Activated CD4-positive, alpha-beta T cell treated with anti-CD3 and anti-CD28 coated beads for 36 hours (primary cell): ENCODE measurements at regions of chr2 and their contacts with region 1.

Region 1: DNA sequence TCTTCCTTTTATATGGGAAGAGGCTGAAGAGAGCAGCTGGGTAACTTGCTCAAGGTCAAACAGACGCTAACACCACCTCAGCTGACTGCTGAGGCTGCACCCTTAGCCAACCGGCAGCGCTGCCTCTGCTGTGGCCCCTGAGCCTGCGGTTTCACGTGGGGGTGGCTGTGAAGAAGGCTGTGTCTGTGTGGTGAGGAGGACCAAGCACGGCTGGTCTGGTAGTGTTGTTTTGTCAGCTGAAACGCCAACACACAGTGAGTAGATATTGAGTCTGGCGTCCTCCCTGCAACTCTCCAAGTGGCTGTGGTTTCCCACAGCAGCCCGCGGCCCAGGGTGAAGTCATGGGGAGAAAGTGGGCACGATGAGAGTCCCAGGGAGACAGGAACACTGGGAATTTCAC is 69.6 kb downstream of the THNSL2 start:
- DNase-seq: no peak
- ATAC-seq: no peak
- H3K4me3 Mint-ChIP-seq: no peak overlapping the region
- H3K27ac Mint-ChIP-seq: no peak overlapping the region
- H3K4me1 Mint-ChIP-seq: no peaks in the 10 kb centered on the region
- H3K27me3 Mint-ChIP-seq: peaks cover 3% of the 10 kb centered on the region

Region 2: DNA sequence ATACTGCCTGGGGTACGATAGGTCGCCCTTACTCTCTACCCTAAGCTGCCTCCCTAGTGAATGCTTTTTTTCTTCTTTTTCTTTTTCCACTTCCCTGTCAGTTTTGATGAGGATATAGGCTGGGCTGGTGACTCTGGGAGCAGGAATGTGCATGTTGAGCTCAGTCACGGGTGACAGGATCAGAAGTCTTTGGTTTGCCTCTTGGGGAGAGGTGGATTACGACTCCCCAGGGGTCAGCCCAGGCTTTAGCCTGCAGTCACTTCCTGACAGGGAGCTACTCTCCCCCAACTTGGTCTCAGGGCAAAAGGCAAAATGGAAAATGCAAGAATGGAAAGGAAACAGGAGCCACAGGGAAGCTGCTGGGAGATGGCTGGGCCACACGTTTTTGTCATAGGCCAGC is 12.3 kb before region 1 on chr2:
- CTCF ChIA-PET with region 1: no interaction called
- POLR2A ChIA-PET with region 1: no interaction called
- intact Hi-C with region 1: loop called in 1 of 2 experiments (anchors 2 kb)
- DNase-seq: no peak
- ATAC-seq: no peak
- H3K4me3 Mint-ChIP-seq: no peak overlapping the region
- H3K27ac Mint-ChIP-seq: no peak overlapping the region
- H3K4me1 Mint-ChIP-seq: no peaks in the 10 kb centered on the region
- H3K27me3 Mint-ChIP-seq: peaks cover 3% of the 10 kb centered on the region

Region 3: DNA sequence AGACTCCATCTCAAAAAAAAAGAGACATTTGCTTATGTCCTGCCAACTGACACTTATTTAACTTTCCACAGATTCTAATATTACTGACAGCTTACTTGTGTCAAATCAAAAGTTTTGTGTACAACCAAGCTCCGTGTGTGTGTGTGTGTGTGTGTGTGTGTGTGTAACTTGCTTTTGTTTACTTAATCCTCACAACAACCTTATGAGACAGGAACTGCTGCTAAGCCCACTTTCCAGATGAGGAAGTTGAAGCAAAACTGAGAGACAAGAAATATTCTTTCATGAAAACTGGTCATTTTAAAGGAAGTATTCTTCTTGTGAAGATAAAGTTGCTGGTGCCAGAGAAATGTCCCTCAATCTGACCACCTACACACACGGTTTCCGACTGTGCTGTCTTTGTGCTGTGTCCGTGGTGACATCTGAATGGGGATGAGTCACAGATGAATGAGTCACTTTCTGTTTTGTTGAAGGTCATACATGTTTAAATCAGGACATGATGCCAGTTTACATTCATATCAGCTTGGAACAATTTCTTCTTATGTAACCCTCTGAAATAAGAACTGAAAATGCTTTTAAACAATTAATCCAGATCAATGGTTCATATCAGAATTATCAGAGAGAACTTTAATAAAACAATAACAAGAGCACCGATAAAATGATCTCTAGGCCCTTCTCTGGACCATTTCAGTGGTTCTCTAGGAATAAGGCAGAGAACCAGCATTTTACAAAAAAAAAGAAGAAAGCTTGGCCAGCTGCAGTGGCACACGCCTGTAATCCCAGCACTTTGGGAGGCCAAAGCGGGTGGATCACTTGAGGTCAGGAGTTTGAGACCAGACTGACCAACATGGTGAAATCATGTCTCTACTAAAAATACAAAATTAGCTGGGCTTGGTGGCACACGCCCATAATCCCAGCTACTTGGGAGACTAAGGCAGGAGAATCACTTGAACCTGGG is 25.8 kb after region 1 on chr2:
- CTCF ChIA-PET with region 1: no interaction called
- POLR2A ChIA-PET with region 1: no interaction called
- intact Hi-C with region 1: no loop called
- DNase-seq: peak; percentile 22
- ATAC-seq: peak; percentile 77
- H3K4me3 Mint-ChIP-seq: no peak overlapping the region
- H3K27ac Mint-ChIP-seq: no peak overlapping the region
- H3K4me1 Mint-ChIP-seq: peaks cover 5% of the 10 kb centered on the region
- H3K27me3 Mint-ChIP-seq: peaks cover 9% of the 10 kb centered on the region